Panc1 (cell line): ENCODE measurements at regions of chr14 and their contacts with region 1.

Region 1: DNA sequence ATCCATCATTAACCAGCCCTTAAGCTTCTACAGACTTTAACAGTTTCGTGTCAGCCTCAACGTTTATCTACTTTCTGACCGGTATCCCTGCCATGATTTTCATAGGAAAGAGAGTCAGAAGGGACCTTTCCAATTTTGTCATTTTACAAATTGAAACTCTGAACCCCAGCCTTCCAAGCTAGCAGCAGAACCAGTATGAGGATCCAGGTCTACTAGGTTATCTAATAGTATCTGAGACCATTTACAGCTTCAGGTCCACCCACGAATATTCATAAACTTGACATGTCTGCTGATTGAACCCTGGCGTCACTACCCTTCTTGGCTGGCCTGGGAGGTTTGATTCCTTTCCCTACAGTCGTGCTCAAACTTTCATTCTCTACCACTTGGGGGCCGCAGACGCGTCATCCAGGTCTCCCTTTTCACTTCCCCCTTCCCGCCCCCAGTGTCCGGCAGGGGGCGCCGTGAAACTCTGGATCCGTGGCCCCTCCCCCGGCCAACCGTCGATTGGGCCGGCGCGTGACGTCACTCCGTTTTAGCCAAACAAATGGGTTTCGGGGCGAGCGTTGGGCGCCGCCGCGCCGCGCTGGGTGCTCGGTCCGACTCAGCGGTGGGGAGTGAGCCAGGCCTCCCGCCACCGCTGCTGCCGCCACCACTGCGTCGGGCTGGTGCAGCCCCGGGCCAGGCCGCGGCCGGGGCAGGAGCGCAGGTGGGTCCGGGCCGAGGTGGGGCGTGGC is at the start of gene FBXO34:
- DNase-seq: peak; percentile 70
- ATAC-seq: peak; percentile 94
- H3K4me3 ChIP-seq: peak within 1 kb of the TSS; percentile 69 to 91
- H3K27ac ChIP-seq: peak within 1 kb of the TSS; percentile 81
- H3K4me1 ChIP-seq: peaks cover 25% of the 10 kb centered on the region
- H3K27me3 ChIP-seq: no peaks in the 10 kb centered on the region
- CTCF ChIP-seq: peak; percentile 97
- total RNA-seq, gene FBXO34: 18.8 TPM

Region 2: DNA sequence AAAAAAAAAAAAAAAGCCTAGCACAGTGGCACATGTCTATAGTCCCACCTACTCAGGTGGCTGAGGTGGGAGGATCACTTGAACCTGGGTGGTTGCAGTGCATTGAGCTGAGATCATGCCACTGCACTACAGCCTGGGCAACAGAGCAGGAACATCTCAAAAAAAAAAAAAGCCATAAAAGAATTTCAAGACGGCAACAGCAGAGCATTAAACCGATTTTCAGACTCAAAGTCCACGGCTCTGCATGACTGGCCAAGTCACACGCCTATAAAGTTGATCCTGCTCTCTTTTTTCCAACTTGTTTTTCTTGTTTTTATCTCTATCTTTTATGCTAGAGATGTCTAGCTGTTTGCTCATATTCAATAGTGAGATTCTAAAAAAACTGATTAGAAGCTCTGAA is 45.6 kb after region 1 on chr14:
- CTCF ChIA-PET with region 1: no interaction called
- POLR2A ChIA-PET with region 1: no interaction called
- in situ Hi-C with region 1: no loop called
- intact Hi-C with region 1: no loop called
- DNase-seq: no peak
- ATAC-seq: no peak
- H3K4me3 ChIP-seq: no peak overlapping the region
- H3K27ac ChIP-seq: no peak overlapping the region
- H3K4me1 ChIP-seq: no peaks in the 10 kb centered on the region
- H3K27me3 ChIP-seq: no peaks in the 10 kb centered on the region
- CTCF ChIP-seq: no peak

Region 3: DNA sequence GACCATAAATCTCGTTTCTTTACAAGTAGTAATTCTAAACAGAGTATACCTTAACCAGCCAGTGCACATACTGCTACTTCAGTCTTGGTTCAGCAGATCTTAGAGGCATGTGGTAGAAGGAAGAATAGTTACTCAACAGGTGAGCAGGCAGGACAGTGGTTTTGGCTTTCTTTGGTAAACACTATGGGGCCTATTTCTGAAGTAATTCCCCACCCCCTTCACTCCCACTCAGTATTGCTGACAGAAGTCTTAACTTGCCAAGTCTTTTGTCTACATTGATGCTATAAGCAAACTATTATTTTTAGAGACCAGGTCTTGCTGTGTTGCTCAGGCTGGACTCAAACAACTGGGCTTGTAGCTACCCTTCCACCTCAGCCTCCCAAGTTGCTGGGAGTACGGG is 68.8 kb after region 1 on chr14:
- CTCF ChIA-PET with region 1: no interaction called
- POLR2A ChIA-PET with region 1: no interaction called
- in situ Hi-C with region 1: no loop called
- intact Hi-C with region 1: loop called (anchors 10 kb)
- DNase-seq: no peak
- ATAC-seq: no peak
- H3K4me3 ChIP-seq: no peak overlapping the region
- H3K27ac ChIP-seq: no peak overlapping the region
- H3K4me1 ChIP-seq: peaks cover 19% of the 10 kb centered on the region
- H3K27me3 ChIP-seq: no peaks in the 10 kb centered on the region
- CTCF ChIP-seq: no peak

Region 4: DNA sequence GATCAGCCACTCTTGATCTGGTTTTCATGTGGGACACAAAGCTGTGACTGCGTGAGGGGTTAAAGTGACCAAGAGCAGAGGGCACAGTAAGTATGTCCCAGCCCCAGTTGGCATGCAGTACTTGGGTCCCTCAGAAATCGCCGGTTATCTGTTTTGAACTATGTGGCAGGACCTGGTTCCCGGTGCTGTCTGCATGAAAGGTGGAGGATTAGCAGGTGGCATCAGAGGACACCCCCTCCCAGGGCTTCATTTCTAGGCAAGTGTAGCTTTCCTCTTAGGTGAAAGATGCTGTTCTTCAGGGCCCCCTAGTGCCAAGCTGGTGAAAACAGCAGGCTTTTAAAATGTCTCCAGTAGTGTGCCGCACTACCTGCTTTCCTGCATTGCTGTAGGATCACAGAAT is 83.5 kb after region 1 on chr14:
- CTCF ChIA-PET with region 1: interaction called, 11 read pairs
- POLR2A ChIA-PET with region 1: no interaction called
- in situ Hi-C with region 1: no loop called
- intact Hi-C with region 1: loop called (anchors 10 kb)
- DNase-seq: no peak
- ATAC-seq: peak; percentile 86
- H3K4me3 ChIP-seq: no peak overlapping the region
- H3K27ac ChIP-seq: no peak overlapping the region
- H3K4me1 ChIP-seq: no peaks in the 10 kb centered on the region
- H3K27me3 ChIP-seq: no peaks in the 10 kb centered on the region
- CTCF ChIP-seq: peak; percentile 81